ENCODE measurements at regions of chr17 and their contacts with region 1.

Region 1: GRCh38 chr17:8326511-8327302 is 12.9 kb upstream of the ODF4 start:
- DNase-seq: peak; percentile 52
- ATAC-seq: peak; percentile 70
- H3K4me3 Mint-ChIP-seq: peak overlapping the region; percentile 58
- H3K27ac Mint-ChIP-seq: no peak overlapping the region
- H3K4me1 Mint-ChIP-seq: peaks cover 9% of the 10 kb centered on the region
- H3K27me3 Mint-ChIP-seq: peaks cover 33% of the 10 kb centered on the region

Region 2: GRCh38 chr17:7951143-7951803 is 375.4 kb before region 1 on chr17:
- CTCF ChIA-PET with region 1: no interaction called
- POLR2A ChIA-PET with region 1: no interaction called
- intact Hi-C with region 1: no loop called
- DNase-seq: peak; percentile 71
- ATAC-seq: peak; percentile 97
- H3K4me3 Mint-ChIP-seq: peak overlapping the region; percentile 4
- H3K27ac Mint-ChIP-seq: peak overlapping the region; percentile 83
- H3K4me1 Mint-ChIP-seq: peaks cover 22% of the 10 kb centered on the region
- H3K27me3 Mint-ChIP-seq: no peaks in the 10 kb centered on the region

Region 3: DNA sequence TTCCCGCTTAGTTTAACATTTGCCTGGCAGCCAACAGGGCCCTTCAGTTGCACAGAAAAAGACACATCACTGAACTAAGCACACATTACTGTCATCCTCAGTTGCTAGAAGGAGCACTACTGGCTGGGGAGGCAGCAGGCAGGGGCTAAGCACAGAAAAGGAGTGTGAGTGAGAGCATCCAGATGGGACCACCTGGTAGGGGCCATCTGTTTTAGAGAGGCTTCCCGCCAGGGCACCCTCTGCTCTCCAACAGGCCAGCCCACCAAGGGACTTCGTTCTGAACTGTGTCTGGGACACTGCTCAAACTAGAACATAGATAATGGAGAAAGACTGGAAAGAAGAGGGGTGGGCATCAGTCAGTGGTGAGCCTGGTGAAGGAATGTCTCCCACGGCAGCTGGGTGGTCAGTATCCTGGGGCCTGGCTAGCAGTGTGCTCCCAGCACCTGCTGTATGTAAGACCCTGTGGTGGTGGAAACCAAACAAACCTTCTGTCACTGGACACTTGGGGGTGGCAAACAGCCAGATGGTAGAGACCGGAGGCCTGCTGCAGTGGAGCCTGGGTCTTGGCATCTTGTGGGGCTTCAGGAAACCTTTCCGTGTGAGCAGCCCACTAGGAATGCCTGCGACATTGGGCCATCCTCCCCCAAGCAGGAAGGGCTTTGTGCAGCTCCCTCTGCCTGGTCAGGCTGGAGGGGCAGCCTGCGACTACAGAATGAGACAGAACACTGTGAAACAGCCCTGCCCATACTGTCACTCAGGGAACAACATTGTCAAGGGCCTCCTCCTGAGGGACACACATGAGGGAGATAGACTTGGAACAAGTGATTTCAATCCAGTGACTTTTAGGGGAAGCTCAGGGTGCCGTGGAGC is 51.1 kb before region 1 on chr17:
- CTCF ChIA-PET with region 1: no interaction called
- POLR2A ChIA-PET with region 1: interaction called, 12 read pairs
- intact Hi-C with region 1: no loop called
- DNase-seq: no peak
- ATAC-seq: no peak
- H3K4me3 Mint-ChIP-seq: no peak overlapping the region
- H3K27ac Mint-ChIP-seq: no peak overlapping the region
- H3K4me1 Mint-ChIP-seq: no peaks in the 10 kb centered on the region
- H3K27me3 Mint-ChIP-seq: no peaks in the 10 kb centered on the region

Region 4: DNA sequence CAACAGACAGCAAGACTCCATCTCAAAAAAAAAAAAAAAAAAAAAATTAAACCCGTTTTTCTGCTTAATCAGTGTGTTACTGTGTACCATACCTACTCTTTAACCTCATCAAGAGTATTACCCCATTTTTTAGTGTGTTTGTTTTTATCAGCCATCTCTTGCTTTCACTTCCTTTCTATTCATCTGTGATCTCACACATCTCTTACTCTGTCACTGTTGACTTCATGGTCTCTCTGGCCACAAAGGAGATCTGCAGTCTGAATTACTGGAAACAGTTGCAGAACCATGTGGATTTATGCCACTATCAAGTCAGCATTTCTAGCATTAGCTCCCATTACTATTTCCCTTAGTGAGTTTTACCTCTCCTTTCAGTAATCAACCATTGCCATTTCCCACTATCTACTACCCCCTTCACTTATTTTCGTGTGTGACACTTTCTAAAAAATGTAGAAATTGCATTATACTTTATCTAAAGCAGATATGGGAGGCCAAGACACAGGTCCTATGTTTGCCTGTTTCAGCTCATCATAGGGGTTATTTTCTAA is 129.0 kb after region 1 on chr17:
- CTCF ChIA-PET with region 1: no interaction called
- POLR2A ChIA-PET with region 1: no interaction called
- intact Hi-C with region 1: no loop called
- DNase-seq: no peak
- ATAC-seq: no peak
- H3K4me3 Mint-ChIP-seq: no peak overlapping the region
- H3K27ac Mint-ChIP-seq: peak overlapping the region; percentile 10
- H3K4me1 Mint-ChIP-seq: peaks cover 14% of the 10 kb centered on the region
- H3K27me3 Mint-ChIP-seq: no peaks in the 10 kb centered on the region